Psoas muscle (tissue), 8 donors: ENCODE measurements at regions of chr13 and their contacts with region 1.

Region 1: DNA sequence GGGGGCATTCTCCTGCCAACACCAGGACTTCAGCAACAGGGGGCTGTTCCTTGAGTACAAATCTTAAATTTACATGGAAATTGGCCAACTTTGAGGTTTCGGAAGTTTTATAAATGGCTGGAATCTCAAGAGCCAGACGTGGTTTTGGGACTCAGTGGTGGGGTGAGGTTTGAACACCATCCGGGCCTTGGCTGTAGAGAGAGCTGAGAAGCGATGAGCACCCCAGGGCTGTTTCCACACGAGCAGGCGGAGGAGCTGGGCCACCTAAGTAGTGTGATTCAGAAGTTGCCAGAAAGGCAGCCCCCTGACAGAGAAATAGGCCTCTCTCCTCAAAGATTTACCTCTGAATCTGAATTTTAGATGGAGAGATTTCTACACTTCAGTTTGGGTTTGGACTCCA is 89.0 kb downstream of the FGF9 start:
- DNase-seq: no peak
- ATAC-seq: no peak
- H3K4me3 ChIP-seq: no peak overlapping the region
- H3K27ac ChIP-seq: no peak overlapping the region
- H3K4me1 ChIP-seq: no peaks in the 10 kb centered on the region
- H3K27me3 ChIP-seq: no peaks in the 10 kb centered on the region
- CTCF ChIP-seq: no peak

Region 2: DNA sequence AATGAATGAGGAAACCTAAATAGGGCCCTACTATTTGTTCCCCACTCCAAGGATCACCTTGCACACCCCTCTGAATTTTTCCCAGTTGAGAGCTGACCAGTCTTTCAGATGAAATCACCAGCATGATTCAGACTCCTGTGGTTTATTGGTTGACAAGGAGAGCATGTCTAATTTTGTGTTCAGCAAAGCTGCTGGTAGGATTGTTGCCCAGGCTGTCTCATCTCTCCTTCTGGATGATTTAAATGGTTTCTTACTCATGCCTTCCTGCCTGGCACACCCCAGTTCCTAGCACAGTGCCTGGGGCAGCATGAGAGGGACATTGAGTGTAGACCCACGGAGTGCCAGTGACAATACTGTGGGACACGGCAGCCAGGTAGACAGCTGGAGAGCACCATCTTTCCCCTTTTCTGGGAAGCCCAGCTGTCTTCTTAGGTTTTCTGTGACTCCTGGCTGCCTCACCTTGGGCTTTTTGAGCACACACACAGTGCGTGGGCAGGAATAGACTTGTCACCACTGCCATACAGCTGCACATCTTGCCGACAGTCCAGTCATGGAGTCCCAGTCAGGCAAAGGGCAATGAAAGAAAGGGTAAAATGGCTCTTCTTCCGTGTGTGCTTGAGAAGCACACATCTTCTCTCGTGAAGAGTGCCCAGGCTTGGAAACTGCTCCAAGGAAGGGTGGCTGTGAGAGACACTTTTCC is 76.7 kb before region 1 on chr13:
- intact Hi-C with region 1: loop called in 1 of 2 experiments (anchors 2 kb)
- DNase-seq: peak in 1 of 2 donors; percentile 26
- ATAC-seq: peak; percentile 83 to 95 (median 94)
- H3K4me3 ChIP-seq: peak overlapping the region; percentile 22
- H3K27ac ChIP-seq: peak overlapping the region; percentile 76
- H3K4me1 ChIP-seq: no peaks in the 10 kb centered on the region
- H3K27me3 ChIP-seq: no peaks in the 10 kb centered on the region
- CTCF ChIP-seq: no peak